ENCODE measurements at regions of chr1 and their contacts with region 1.

Region 1: GRCh38 chr1:40161125-40161887 is at the start of gene RLF:
- DNase-seq: peak; percentile 92
- H3K4me3 ChIP-seq: peak within 1 kb of the TSS; percentile 85 to 94
- H3K27ac ChIP-seq: peak within 1 kb of the TSS; percentile 91 to 95
- H3K4me1 ChIP-seq: no peaks in the 10 kb centered on the region
- H3K27me3 ChIP-seq: no peaks in the 10 kb centered on the region
- CTCF ChIP-seq: peak in 2 of 4 experiments; percentile 5 to 35
- POLR2A ChIP-seq: peak; percentile 95
- total RNA-seq, gene RLF: 12.4 to 19.8 TPM

Region 2: DNA sequence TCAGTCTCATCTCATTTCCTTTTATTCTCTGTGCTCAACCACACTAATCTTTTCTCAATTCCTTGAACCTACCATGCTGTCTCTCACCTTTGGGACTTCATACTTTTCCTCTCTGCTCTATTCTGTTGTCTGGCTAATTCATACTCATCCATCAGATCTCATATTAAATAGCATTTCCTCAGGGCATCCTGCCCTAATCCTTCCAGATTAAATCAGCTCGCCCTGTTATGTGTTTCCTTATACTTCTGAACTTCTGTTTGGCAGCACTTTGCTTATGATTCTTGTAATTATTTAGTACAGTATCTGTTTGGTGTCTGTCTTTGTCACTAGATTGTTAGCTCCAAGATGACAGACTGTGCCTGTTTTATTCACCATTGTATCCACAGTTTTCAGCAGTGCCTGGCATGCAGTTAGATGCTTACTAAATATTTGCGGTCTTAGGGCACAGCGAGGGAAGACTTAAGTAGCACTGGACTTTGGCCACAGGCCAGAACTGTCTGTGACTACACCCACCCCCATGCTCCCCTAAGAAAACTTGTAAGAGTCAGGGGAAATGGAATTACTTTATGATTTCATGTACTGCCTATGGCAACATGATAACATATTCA is 130.7 kb before region 1 on chr1:
- intact Hi-C with region 1: no loop called
- DNase-seq: no peak
- H3K4me3 ChIP-seq: no peak overlapping the region
- H3K27ac ChIP-seq: no peak overlapping the region
- H3K4me1 ChIP-seq: no peaks in the 10 kb centered on the region
- H3K27me3 ChIP-seq: no peaks in the 10 kb centered on the region
- CTCF ChIP-seq: no peak
- POLR2A ChIP-seq: no peak

Region 3: DNA sequence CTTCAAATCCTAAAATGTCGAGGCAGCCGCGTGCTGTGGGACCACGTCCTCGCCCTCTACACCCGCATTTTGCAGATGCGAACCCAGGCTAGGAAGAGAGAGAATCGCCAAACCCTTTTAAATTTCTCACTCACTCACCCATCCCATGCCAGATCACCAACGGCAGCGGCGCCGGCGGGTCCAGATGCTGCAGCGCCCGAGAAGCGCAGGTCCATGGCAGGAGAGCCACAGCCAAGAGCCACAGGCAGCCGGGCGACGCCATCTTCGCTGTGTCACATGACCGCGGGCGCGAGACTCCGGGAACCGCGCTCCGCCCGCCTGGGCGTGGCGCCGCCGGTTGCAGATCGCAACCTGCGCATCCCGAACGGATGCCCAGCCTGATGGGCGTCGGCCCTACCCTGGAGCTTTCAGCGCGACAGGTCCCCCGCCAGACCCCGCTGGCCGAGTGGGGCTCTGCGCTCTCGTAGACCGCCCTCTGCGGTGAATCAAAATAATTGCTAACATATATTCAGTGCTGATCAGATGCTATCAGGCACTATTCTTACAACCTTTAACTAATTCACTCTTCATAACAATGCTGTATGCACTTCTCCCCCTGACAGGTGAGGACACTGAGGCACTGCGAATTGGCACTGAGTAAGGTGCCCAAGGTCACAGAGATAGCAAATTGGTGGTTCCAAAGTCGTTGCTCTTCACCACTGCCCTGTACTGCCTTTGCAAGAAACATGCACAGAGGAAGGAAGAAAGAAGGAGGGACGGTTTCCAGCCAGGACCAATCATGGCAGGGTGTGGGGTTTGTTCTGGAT is 64.1 kb before region 1 on chr1 and contains the start of gene PPT1:
- intact Hi-C with region 1: loop called (anchors 10 kb)
- DNase-seq: peak; percentile 75
- H3K4me3 ChIP-seq: peak within 1 kb of the TSS; percentile 65 to 70
- H3K27ac ChIP-seq: peak within 1 kb of the TSS; percentile 55 to 56
- H3K4me1 ChIP-seq: no peaks in the 10 kb centered on the region
- H3K27me3 ChIP-seq: no peaks in the 10 kb centered on the region
- CTCF ChIP-seq: peak in 1 of 4 experiments; percentile 27
- POLR2A ChIP-seq: peak; percentile 38
- total RNA-seq, gene PPT1: 86.2 to 126 TPM

Region 4: DNA sequence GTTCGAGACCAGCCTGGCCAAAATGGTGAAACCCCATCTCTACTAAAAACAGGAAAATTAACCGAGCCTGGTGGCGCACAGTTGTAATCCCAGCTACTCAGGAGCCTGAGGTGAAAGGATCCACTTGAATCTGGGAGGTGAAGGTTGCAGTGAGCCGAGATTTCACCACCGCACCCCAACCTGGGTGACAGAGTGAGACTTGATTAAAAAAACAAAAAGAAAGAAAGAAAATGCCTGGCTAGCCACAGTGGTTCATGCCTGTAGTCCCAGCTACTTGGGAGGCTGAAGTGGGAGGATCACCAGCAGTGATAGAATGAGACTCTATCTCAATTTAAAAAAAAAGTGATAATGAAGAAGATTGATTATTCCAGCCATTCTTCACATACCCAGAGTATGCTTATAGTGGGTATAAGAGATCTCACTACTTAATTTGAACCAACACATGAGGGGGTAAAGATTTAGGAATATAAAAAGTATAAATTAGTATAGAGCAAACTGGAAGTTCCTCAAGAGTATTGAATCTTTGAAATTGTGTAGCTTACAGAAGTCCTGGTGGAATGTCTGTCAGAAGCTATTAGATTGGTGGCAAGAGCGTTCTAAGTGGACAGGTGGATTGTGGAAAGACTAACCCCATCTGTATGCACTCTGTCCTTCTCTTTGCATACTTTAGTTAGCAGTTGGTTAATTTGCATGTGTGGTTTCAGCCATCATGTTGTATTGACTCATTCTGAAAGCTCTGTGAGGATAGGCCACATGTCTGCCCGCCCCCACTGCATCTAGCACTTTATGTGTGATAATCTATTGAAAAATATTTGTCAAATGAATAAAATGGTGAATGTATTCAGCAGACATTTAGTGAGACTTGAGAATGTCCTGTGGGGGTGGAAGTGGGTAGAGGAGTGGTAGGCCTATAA is 24.9 kb after region 1 on chr1:
- intact Hi-C with region 1: no loop called
- DNase-seq: no peak
- H3K4me3 ChIP-seq: no peak overlapping the region
- H3K27ac ChIP-seq: no peak overlapping the region
- H3K4me1 ChIP-seq: no peaks in the 10 kb centered on the region
- H3K27me3 ChIP-seq: no peaks in the 10 kb centered on the region
- CTCF ChIP-seq: no peak
- POLR2A ChIP-seq: no peak

Region 5: DNA sequence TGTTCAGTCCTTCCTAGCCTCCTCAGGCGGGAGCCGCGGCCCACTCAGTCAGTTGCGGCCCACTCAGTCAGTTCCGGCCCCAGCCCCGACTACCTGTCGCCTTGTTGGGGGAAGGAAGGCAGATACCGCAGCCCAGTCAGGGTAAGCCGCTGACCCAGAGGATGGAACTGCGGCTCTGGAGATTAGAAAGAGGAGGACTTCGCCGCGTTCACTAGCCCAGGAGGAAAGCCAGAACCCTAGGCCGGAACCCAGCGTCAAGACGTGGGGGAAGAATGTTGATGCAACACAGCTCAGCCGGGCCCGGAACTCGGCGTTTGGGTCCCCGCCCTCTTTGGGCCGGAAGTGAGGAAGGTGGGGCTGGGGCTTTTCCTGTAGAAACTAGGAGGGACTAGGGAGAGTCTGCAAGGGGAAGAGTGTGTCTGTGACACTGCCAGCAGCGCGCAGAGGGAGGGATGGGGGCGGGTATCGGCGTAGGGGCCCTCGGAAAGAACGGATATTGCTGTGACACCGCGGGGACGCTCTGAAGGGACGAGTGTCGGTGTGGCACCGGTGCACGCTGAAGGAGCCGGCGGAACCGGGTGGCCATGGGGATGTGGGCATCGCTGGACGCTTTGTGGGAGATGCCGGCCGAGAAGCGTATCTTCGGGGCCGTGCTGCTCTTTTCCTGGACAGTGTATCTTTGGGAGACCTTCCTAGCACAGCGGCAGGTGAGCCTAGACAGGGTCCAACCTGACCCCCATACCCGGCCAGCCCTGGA is 96.6 kb after region 1 on chr1 and contains the start of gene ZMPSTE24:
- intact Hi-C with region 1: loop called (anchors 5 kb)
- DNase-seq: peak; percentile 94
- H3K4me3 ChIP-seq: peak within 1 kb of the TSS; percentile 67 to 68
- H3K27ac ChIP-seq: peak within 1 kb of the TSS; percentile 89 to 93
- H3K4me1 ChIP-seq: no peaks in the 10 kb centered on the region
- H3K27me3 ChIP-seq: no peaks in the 10 kb centered on the region
- CTCF ChIP-seq: peak in 2 of 4 experiments; percentile 10 to 17
- POLR2A ChIP-seq: peak; percentile 35
- total RNA-seq, gene ZMPSTE24: 32.8 to 57.7 TPM

Measured in prostate gland (tissue), 2 donors.